Mammary epithelial cell (primary cell): ENCODE measurements at regions of chr1 and their contacts with region 1.

Region 1: GRCh38 chr1:100708476-100709062 is 11.0 kb upstream of the VCAM1 start:
- DNase-seq: no peak
- H3K4me3 ChIP-seq: no peak overlapping the region
- H3K27ac ChIP-seq: no peak overlapping the region
- H3K4me1 ChIP-seq: no peaks in the 10 kb centered on the region
- H3K27me3 ChIP-seq: no peaks in the 10 kb centered on the region
- CTCF ChIP-seq: no peak

Region 2: DNA sequence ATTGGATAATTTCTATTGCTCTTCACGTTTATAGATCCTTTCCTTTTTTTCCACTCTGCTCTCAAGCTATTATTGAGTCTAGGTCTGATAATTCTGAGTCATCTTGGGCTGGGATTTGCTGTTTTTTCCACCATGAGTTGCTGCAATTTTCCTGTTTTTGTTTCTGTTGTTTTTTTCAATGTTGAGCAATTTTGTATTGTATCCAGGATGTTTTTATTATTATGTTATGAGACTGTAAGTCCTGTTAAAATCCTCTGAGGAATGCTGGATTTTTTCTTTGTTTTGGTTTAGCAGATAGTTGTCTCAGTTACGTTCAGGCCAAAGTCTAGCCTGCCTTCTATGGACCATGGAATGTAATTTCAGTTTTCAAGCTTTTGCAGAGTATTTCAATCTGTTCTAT is 751.8 kb before region 1 on chr1:
- CTCF ChIA-PET with region 1: no interaction called
- dilution Hi-C with region 1: no loop called
- in situ Hi-C with region 1: no loop called
- intact Hi-C with region 1: no loop called
- DNase-seq: no peak
- H3K4me3 ChIP-seq: no peak overlapping the region
- H3K27ac ChIP-seq: no peak overlapping the region
- H3K4me1 ChIP-seq: no peaks in the 10 kb centered on the region
- H3K27me3 ChIP-seq: no peaks in the 10 kb centered on the region
- CTCF ChIP-seq: no peak

Region 3: GRCh38 chr1:100657876-100658715 is 50.5 kb before region 1 on chr1:
- CTCF ChIA-PET with region 1: no interaction called
- dilution Hi-C with region 1: loop called (anchors 5 kb)
- in situ Hi-C with region 1: no loop called
- intact Hi-C with region 1: no loop called
- DNase-seq: no peak
- H3K4me3 ChIP-seq: no peak overlapping the region
- H3K27ac ChIP-seq: no peak overlapping the region
- H3K4me1 ChIP-seq: no peaks in the 10 kb centered on the region
- H3K27me3 ChIP-seq: peaks cover 2% of the 10 kb centered on the region
- CTCF ChIP-seq: no peak

Region 4: DNA sequence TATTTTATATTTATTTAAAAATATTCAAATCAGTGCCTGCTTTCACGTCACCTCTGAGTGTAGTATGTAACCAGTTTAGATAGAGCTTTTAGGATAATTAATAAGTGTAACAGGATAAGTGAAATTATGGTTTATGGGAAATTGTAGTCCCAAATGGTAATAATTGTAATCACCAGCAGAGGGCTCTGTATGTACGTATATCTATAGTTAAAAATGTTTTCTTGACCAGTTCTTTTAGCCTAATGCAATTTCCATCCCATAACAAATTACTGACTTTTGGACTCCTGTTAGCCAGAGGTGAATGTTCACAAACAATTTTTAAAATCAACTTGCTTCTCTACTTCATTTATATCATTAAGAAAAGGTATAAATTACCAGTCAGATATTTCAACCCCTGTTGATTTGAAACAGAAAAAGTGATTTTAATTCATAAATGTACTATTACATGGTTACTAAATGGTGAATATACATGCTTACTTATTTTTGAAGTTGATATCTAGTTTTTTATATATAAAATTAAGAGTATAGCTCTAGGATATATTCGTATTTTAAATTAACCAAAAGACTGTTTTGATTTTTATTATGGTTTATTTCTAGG is 212.6 kb after region 1 on chr1:
- CTCF ChIA-PET with region 1: no interaction called
- dilution Hi-C with region 1: no loop called
- in situ Hi-C with region 1: no loop called
- intact Hi-C with region 1: no loop called
- DNase-seq: peak; percentile 25
- H3K4me3 ChIP-seq: no peak overlapping the region
- H3K27ac ChIP-seq: no peak overlapping the region
- H3K4me1 ChIP-seq: no peaks in the 10 kb centered on the region
- H3K27me3 ChIP-seq: no peaks in the 10 kb centered on the region
- CTCF ChIP-seq: peak; percentile 46 to 51